Ascending aorta (tissue), 2 donors: ENCODE measurements at regions of chr4 and their contacts with region 1.

Region 1: GRCh38 chr4:88613417-88613875 is 21.2 kb downstream of the HERC3 start:
- DNase-seq: no peak
- H3K4me3 ChIP-seq: no peak overlapping the region
- H3K27ac ChIP-seq: peak overlapping the region; percentile 72 to 78
- H3K4me1 ChIP-seq: peaks cover 15 to 35% of the 10 kb centered on the region in 2 donors
- H3K27me3 ChIP-seq: no peaks in the 10 kb centered on the region
- CTCF ChIP-seq: no peak

Region 2: GRCh38 chr4:88045021-88045420 is 568.4 kb before region 1 on chr4:
- intact Hi-C with region 1: no loop called
- DNase-seq: no peak
- H3K4me3 ChIP-seq: no peak overlapping the region
- H3K27ac ChIP-seq: peak overlapping the region in 1 of 2 donors; percentile 19
- H3K4me1 ChIP-seq: peaks cover 0 to 6% of the 10 kb centered on the region in 2 donors
- H3K27me3 ChIP-seq: no peaks in the 10 kb centered on the region
- CTCF ChIP-seq: no peak

Region 3: GRCh38 chr4:88481537-88481936 is 131.9 kb before region 1 on chr4:
- intact Hi-C with region 1: no loop called
- DNase-seq: no peak
- H3K4me3 ChIP-seq: no peak overlapping the region
- H3K27ac ChIP-seq: no peak overlapping the region
- H3K4me1 ChIP-seq: no peaks in the 10 kb centered on the region
- H3K27me3 ChIP-seq: no peaks in the 10 kb centered on the region
- CTCF ChIP-seq: no peak

Region 4: GRCh38 chr4:88523325-88524129 is 89.9 kb before region 1 on chr4 and contains the start of gene PYURF:
- intact Hi-C with region 1: loop called (anchors 5 kb)
- DNase-seq: peak; percentile 88 to 99
- H3K4me3 ChIP-seq: peak within 1 kb of the TSS; percentile 87 to 95
- H3K27ac ChIP-seq: peak within 1 kb of the TSS; percentile 87 to 94
- H3K4me1 ChIP-seq: peaks cover 0 to 16% of the 10 kb centered on the region in 2 donors
- H3K27me3 ChIP-seq: no peaks in the 10 kb centered on the region
- CTCF ChIP-seq: peak in 1 of 3 experiments; percentile 5
- total RNA-seq, gene PYURF: 91.6 TPM

Region 5: GRCh38 chr4:88629826-88630225 is 16.4 kb after region 1 on chr4:
- intact Hi-C with region 1: loop called (anchors 2 kb)
- DNase-seq: no peak
- H3K4me3 ChIP-seq: no peak overlapping the region
- H3K27ac ChIP-seq: no peak overlapping the region
- H3K4me1 ChIP-seq: peaks cover 0 to 11% of the 10 kb centered on the region in 2 donors
- H3K27me3 ChIP-seq: no peaks in the 10 kb centered on the region
- CTCF ChIP-seq: no peak

Region 6: GRCh38 chr4:89331686-89332544 is 718.5 kb after region 1 on chr4:
- intact Hi-C with region 1: no loop called
- DNase-seq: no peak
- H3K4me3 ChIP-seq: no peak overlapping the region
- H3K27ac ChIP-seq: no peak overlapping the region
- H3K4me1 ChIP-seq: no peaks in the 10 kb centered on the region
- H3K27me3 ChIP-seq: no peaks in the 10 kb centered on the region
- CTCF ChIP-seq: no peak